WTC11 (cell line): ENCODE measurements at regions of chr19 and their contacts with region 1.

Region 1: DNA sequence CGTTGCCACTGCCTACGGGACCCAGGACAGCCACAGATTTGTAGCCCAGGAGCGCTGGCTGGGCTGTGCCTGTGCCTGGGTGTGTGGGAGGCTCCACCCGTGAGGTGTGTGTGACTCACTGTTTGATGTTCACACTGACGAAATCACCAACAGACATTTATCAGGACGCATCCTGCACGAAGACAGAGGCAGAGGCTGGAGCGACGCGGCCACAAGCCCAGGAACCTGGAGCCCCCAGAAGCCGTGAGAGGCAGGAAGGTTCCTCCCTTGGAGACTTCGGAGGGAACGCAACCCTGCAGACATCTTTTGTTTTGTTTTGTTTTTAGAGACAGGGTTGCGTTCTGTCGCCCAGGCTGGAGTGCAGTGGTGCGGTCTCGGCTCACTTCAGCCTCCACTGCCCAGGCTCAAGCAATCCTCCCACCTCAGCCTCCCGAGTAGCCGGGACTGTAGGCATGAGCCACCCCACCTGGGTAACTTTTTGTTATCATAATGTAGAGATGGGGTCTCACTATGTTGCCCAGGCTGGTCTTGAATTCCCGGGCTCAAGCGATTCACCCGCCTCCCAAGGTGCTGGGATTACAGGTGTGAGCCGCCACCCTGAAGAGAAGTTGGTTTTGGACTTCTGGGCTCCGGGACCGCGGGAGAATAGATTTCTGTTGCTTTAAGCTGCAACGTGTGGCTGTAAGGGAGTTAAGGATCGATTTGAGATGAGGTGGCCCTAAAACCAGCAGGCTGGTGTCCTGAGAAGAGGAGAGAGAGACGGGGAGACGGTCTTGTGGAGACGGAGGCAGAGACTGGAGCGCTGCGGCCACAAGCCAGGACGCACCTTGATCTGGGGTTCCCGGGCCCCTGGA is 25.0 kb upstream of the WDR18 start:
- DNase-seq: no peak
- ATAC-seq: no peak
- H3K4me3 Mint-ChIP-seq: no peak overlapping the region
- H3K27ac Mint-ChIP-seq: peak overlapping the region; percentile 95
- H3K4me1 Mint-ChIP-seq: peaks cover 31% of the 10 kb centered on the region
- H3K27me3 Mint-ChIP-seq: no peaks in the 10 kb centered on the region
- CTCF ChIP-seq: no peak

Region 2: DNA sequence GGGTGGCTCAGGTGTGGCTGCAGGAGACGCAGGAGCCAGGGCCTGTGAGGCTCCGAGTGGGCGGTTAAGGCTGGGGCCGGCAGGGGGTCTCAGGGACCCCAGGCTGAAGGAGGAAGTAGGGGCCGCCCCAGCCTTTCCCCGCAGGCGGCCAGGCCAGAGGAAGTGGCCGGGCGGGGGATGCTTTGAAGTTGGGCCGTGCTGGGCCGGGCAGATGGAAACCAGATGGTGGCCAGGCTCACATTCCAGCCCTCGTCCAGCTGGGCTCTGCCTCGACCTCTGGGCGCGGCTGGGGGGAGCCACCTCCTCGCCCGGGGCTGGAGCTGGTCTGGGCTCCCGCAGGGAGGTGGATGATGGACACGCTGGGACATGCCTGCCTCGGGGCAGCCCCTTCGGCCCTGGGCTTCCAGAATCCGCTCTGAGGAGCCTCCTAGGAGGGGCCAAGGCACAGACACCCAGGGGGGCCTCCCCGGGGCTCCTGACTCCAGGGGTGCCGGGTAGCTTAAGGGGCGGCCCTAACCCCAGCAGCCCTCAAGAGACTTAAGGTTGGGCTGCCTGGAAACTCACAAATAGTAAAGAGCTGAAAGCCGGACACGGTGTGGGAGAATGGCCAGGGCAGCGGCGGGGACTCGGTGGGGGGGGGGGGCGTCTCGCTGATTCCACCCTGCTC is 25.8 kb before region 1 on chr19:
- CTCF ChIA-PET with region 1: interaction called, 13 read pairs
- POLR2A ChIA-PET with region 1: no interaction called
- DNase-seq: no peak
- ATAC-seq: peak; percentile 18; the same call in 1 of the 2 replicates
- H3K4me3 Mint-ChIP-seq: no peak overlapping the region
- H3K27ac Mint-ChIP-seq: no peak overlapping the region; the same call in 1 of the 2 replicates
- H3K4me1 Mint-ChIP-seq: peaks cover 16% of the 10 kb centered on the region
- H3K27me3 Mint-ChIP-seq: no peaks in the 10 kb centered on the region
- CTCF ChIP-seq: no peak

Region 3: GRCh38 chr19:970695-971094 is 11.5 kb after region 1 on chr19:
- CTCF ChIA-PET with region 1: interaction called, 11 read pairs
- POLR2A ChIA-PET with region 1: no interaction called
- DNase-seq: no peak
- ATAC-seq: 0 out of 2 replicates have a peak, but pooled peaks have one; percentile 32
- H3K4me3 Mint-ChIP-seq: no peak overlapping the region
- H3K27ac Mint-ChIP-seq: no peak overlapping the region
- H3K4me1 Mint-ChIP-seq: peaks cover 3% of the 10 kb centered on the region; the same call in 1 of the 2 replicates
- H3K27me3 Mint-ChIP-seq: no peaks in the 10 kb centered on the region
- CTCF ChIP-seq: peak; percentile 87

Region 4: GRCh38 chr19:1076951-1077350 is 117.8 kb after region 1 on chr19:
- CTCF ChIA-PET with region 1: no interaction called
- POLR2A ChIA-PET with region 1: no interaction called
- DNase-seq: no peak
- ATAC-seq: no peak
- H3K4me3 Mint-ChIP-seq: no peak overlapping the region
- H3K27ac Mint-ChIP-seq: no peak overlapping the region
- H3K4me1 Mint-ChIP-seq: peaks cover under 1% of the 10 kb centered on the region
- H3K27me3 Mint-ChIP-seq: peaks cover 3% of the 10 kb centered on the region
- CTCF ChIP-seq: no peak